Activated CD4-positive, alpha-beta T cell treated with anti-CD3 and anti-CD28 coated beads for 36 hours (primary cell): ENCODE measurements at regions of chr10 and their contacts with region 1.

Region 1: DNA sequence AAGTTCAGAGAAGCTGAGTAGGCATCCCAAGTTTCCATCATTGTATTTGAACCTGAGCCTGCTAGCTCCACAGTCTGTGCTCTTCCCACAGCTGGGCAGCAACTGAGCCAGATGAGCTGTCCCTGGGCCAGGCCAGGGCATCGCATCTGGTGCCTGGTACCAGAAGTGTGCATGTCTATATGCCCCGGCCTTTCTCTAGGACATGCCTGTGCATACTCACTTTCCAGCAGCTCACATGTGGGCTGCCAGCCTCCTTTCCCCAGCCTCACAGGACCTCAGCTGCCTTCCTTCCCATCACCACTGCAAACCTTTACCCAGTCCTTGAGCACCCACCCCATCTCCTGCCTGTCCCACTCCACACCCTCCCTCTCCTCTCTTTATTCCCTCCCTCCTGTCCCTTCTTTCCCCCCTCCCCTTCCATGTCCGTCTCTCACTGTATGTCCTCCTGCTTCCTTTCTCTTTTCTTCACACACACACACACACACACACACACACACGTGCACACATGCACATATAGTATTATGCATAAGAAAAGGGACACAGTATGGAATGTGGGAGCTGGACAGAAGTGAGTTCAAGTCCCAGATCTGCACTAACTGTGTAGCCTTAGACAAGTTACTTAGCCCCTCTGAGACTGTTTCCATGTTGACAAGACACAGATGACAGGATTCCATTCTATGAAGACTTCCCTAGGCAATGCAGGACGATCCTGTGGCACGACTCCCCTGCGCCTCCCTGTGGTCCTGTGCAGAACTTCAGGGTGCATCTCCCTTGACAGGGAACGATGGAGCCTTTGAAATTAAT is 10.9 kb downstream of the CDHR1 start:
- DNase-seq: peak; percentile 85
- ATAC-seq: peak; percentile 94
- H3K4me3 Mint-ChIP-seq: no peak overlapping the region
- H3K27ac Mint-ChIP-seq: no peak overlapping the region
- H3K4me1 Mint-ChIP-seq: no peaks in the 10 kb centered on the region
- H3K27me3 Mint-ChIP-seq: peaks cover 2% of the 10 kb centered on the region

Region 2: GRCh38 chr10:84054743-84055142 is 150.5 kb before region 1 on chr10:
- CTCF ChIA-PET with region 1: interaction called, 4 read pairs
- POLR2A ChIA-PET with region 1: no interaction called
- intact Hi-C with region 1: loop called in 1 of 2 experiments (anchors 5 kb)
- DNase-seq: no peak
- ATAC-seq: no peak
- H3K4me3 Mint-ChIP-seq: no peak overlapping the region
- H3K27ac Mint-ChIP-seq: no peak overlapping the region
- H3K4me1 Mint-ChIP-seq: no peaks in the 10 kb centered on the region
- H3K27me3 Mint-ChIP-seq: peaks cover 4% of the 10 kb centered on the region

Region 3: DNA sequence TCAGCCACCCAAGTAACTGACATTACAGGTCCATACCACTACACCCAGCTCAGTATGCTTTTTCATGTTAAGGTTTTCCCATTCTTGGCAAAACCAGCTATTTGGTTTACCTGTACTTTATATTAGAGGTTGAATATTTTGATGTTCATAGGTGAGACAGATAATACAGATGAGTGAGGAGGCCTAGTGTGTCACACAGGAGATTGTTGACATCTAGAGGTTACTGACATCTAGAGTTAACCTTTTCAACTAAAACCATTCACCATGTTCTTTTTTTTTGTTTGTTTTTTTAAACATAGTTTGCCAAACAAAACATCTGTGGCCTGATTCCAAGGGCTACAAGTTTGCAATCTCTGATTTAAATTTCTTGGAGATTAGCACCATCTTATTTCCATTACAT is 57.9 kb before region 1 on chr10:
- CTCF ChIA-PET with region 1: interaction called, 68 read pairs
- POLR2A ChIA-PET with region 1: no interaction called
- intact Hi-C with region 1: loop called (anchors 1 kb)
- DNase-seq: no peak
- ATAC-seq: no peak
- H3K4me3 Mint-ChIP-seq: no peak overlapping the region
- H3K27ac Mint-ChIP-seq: no peak overlapping the region
- H3K4me1 Mint-ChIP-seq: peaks cover 16% of the 10 kb centered on the region
- H3K27me3 Mint-ChIP-seq: no peaks in the 10 kb centered on the region

Region 4: DNA sequence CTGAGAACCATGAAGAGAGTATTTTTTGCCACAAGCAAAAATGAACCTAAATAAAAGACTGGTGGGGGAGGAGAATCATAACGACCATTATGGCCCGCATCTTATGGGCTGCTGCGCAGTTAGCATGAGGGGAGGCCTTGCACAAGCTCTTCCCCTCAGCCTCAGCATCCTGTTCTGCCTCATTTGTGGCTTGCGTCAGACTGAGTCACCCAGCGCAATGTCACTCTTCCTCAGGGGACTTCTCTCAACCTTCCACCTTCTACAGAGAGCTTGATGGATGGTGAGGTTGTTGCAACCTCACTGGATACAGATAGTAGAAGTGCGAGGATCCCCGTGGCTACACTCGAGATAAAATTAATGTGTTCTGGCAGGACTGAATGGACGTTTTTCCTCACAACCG is 48.5 kb before region 1 on chr10:
- CTCF ChIA-PET with region 1: interaction called, 4 read pairs
- POLR2A ChIA-PET with region 1: no interaction called
- intact Hi-C with region 1: loop called in 1 of 2 experiments (anchors 2 kb)
- DNase-seq: peak; percentile 70
- ATAC-seq: peak; percentile 90
- H3K4me3 Mint-ChIP-seq: no peak overlapping the region
- H3K27ac Mint-ChIP-seq: peak overlapping the region; percentile 77
- H3K4me1 Mint-ChIP-seq: peaks cover 37% of the 10 kb centered on the region
- H3K27me3 Mint-ChIP-seq: no peaks in the 10 kb centered on the region

Region 5: GRCh38 chr10:84317174-84317573 is 111.9 kb after region 1 on chr10:
- CTCF ChIA-PET with region 1: no interaction called
- POLR2A ChIA-PET with region 1: no interaction called
- intact Hi-C with region 1: no loop called
- DNase-seq: no peak
- ATAC-seq: no peak
- H3K4me3 Mint-ChIP-seq: no peak overlapping the region
- H3K27ac Mint-ChIP-seq: no peak overlapping the region
- H3K4me1 Mint-ChIP-seq: peaks cover 12% of the 10 kb centered on the region
- H3K27me3 Mint-ChIP-seq: peaks cover 4% of the 10 kb centered on the region

Region 6: DNA sequence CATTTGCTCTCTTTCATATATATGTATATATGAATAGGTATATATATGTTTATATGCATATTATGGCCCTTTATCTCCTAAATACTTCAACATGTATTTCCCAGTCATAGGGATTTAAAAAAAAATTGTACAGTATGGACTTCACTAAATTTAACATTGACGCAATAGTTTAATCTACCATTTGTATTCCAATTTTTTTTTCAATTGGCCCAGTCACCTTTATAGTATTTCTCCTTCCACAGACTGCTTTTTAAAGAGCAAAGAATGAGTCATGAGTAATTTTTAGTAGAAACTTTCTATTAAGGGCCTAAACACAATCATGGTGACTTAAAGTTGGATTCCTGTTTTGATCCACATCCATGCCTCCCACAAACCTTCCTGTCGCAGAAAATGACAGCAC is 143.6 kb after region 1 on chr10:
- CTCF ChIA-PET with region 1: no interaction called
- POLR2A ChIA-PET with region 1: no interaction called
- intact Hi-C with region 1: no loop called
- DNase-seq: no peak
- ATAC-seq: no peak
- H3K4me3 Mint-ChIP-seq: no peak overlapping the region
- H3K27ac Mint-ChIP-seq: no peak overlapping the region
- H3K4me1 Mint-ChIP-seq: peaks cover 58% of the 10 kb centered on the region
- H3K27me3 Mint-ChIP-seq: no peaks in the 10 kb centered on the region